Activated CD4-positive, alpha-beta T cell treated with anti-CD3 and anti-CD28 coated beads, Interleukin-2, amount 10 ng/mL, durations not matched to agents 24 days and 14 days (primary cell): ENCODE measurements at regions of chr1 and their contacts with region 1.

Region 1: DNA sequence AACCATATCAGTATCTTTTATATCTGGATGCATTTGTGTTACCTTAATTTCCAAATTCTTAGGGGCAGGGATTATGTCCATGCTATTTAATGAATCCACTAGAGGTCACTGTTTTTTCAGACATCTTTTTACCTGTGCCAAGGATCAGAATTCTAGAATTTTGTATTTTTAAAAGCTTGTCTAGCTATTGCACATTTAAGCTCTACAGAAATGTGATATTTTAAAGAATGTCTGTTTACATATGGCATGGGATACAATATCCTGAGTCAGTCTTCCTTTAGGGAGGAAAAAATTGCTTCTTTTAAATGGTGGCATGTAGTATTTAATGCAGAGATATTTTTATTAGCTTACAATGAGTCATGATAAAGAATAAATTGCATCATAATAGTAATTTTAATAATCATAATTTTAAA is 11.3 kb downstream of the RPAP2 start:
- DNase-seq: no peak
- H3K4me3 Mint-ChIP-seq: no peak overlapping the region
- H3K27ac Mint-ChIP-seq: no peak overlapping the region
- H3K4me1 Mint-ChIP-seq: peaks cover 34% of the 10 kb centered on the region
- H3K27me3 Mint-ChIP-seq: no peaks in the 10 kb centered on the region

Region 2: DNA sequence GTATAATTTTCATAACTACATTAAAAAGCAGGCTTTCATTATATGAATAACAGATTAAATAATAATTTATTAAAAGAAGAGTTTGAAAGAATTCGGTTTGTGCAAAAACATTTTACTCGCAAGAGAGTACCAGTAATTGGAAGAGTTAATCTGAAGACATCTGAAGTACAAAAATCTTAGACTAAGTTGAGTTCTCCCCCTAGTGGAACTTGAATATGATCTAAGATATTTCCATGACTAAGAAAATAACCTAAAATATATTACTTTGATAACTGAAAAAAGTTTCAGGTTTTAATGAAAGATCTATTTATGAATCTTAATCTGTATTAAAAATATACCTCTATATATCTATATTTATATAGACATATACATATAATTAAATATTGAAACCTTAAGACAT is 289.0 kb after region 1 on chr1:
- intact Hi-C with region 1: loop called (anchors 1 kb)
- DNase-seq: no peak
- H3K4me3 Mint-ChIP-seq: no peak overlapping the region
- H3K27ac Mint-ChIP-seq: no peak overlapping the region
- H3K4me1 Mint-ChIP-seq: peaks cover 28% of the 10 kb centered on the region
- H3K27me3 Mint-ChIP-seq: no peaks in the 10 kb centered on the region

Region 3: DNA sequence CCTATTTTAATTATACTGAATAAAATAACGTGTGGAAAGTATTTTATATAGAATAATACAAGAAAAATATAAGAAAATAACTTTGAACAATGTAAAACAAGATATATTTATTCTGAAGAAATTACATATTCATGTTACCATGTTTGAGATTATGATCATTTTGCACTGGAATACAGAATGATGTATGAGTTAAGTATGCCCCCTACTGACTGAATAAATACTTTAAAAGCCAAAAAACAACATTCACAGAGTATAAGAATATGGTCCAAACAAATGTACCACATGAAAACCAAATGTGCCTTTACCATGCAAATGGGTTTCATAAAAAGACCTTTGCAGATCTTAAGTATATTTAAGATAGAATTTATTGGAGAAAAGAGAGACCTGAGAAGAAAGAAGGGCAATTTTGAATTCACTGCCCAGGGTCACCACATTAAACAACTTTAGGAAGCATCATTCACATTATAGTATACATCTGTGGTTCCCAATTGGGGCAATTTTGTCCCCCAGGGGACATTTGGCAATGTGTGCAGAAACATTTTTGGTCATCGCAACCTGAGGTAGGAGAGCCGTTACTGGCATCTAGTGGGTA is 313.1 kb after region 1 on chr1:
- intact Hi-C with region 1: loop called (anchors 1 kb)
- DNase-seq: peak; percentile 49
- H3K4me3 Mint-ChIP-seq: no peak overlapping the region
- H3K27ac Mint-ChIP-seq: no peak overlapping the region
- H3K4me1 Mint-ChIP-seq: no peaks in the 10 kb centered on the region
- H3K27me3 Mint-ChIP-seq: peaks cover 13% of the 10 kb centered on the region